Heart left ventricle (tissue), 16 donors: ENCODE measurements at regions of chr2 and their contacts with region 1.

Region 1: DNA sequence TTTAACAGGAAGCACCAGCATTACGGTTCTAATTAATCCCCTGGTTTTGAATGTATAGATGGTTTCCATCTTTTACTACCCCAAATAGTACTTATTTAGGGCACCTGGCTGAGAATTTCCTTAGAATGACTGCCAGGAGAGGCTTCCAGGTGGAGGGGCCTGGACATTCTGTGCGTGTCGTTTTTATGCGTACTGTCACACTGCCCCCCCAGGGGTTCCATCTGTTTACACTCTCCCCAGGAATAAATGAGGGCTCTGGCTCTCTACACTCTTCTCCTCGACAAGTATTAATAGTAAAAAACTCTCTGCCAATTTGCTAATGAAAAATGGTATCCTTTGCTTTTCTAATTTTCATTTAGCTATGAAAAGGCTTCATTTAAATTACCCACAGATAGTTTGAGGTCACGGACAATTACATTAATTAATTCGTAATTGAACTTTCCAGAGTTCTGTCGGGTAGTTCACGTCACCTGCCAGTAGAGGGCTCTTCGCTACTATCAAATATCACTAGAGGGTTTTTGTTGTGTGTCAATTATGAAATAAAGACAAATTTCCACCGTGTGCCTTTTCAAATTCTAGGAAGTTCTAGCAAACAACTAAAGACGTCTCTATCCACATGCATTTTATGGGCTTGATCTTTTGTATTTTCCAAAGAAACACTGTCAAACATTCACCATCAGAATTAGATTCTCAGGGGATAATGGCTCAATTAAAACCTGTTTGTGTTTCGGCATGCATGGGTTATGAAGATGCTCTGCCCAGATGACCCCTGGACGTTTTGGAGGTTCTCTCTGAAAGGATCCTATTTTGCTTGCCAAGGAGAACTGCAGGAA is 88.8 kb upstream of the ASB18 start:
- DNase-seq: no peak
- ATAC-seq: peak in 1 of 4 donors; percentile 49
- H3K4me3 ChIP-seq: no peak overlapping the region
- H3K27ac ChIP-seq: no peak overlapping the region
- H3K4me1 ChIP-seq: no peaks in the 10 kb centered on the region
- H3K27me3 ChIP-seq: no peaks in the 10 kb centered on the region
- CTCF ChIP-seq: peak; percentile 75 to 88 (median 83)
- POLR2A ChIP-seq: no peak

Region 2: GRCh38 chr2:236507393-236508085 is 154.6 kb after region 1 on chr2:
- intact Hi-C with region 1: loop called in 6 of 10 experiments (anchors 5 to 10 kb)
- DNase-seq: peak in 3 of 5 donors; percentile 33 to 57 (median 42)
- ATAC-seq: peak in 3 of 4 donors; percentile 44 to 78 (median 69)
- H3K4me3 ChIP-seq: peak overlapping the region in 11 of 12 donors; percentile 10 to 56 (median 45)
- H3K27ac ChIP-seq: no peak overlapping the region
- H3K4me1 ChIP-seq: peaks cover 0 to 7% (median 0%) of the 10 kb centered on the region in 12 donors
- H3K27me3 ChIP-seq: peaks cover 0 to 18% (median 6%) of the 10 kb centered on the region in 9 donors
- CTCF ChIP-seq: no peak
- POLR2A ChIP-seq: no peak

Region 3: DNA sequence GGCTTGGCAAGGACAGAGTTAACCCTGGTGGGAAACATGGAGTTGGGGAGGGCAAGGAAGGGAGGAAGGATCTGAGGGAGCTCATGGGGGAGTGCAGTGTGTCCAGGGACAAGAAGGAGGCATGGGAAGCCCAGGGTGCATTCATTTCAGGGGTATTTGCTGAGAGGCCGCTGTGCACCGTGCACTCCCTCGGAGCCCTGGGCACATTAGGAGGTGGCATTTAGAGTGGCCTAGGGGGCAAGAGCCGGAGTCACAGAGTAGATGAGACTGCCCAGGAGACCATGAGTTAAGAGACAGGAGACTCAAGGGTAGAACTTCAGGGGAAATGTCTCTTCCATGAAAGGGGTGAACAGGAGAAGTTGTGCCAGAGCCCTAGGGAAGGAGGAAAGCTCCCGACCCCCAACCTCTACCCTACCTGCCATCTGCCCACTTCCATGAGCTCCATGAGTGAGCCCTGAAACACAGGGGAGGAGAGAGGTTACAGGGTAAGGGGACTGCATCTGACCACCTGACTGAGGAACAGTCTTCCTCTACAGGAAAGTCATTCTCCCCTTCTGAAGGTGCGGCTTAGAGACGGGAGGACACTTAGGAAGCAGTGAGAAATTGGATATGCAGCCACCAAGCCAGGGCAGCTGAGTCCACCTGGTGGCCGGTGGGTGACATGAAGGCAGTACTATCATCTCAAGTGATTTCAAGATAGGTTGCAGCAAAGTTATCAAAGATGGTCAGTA is 674.2 kb after region 1 on chr2:
- intact Hi-C with region 1: loop called (anchors 1 to 5 kb)
- DNase-seq: peak; percentile 62 to 82 (median 65)
- ATAC-seq: peak; percentile 87 to 92 (median 92)
- H3K4me3 ChIP-seq: no peak overlapping the region
- H3K27ac ChIP-seq: no peak overlapping the region
- H3K4me1 ChIP-seq: peaks cover 0 to 9% (median 0%) of the 10 kb centered on the region in 12 donors
- H3K27me3 ChIP-seq: no peaks in the 10 kb centered on the region
- CTCF ChIP-seq: peak; percentile 62 to 94 (median 86)
- POLR2A ChIP-seq: no peak

Region 4: DNA sequence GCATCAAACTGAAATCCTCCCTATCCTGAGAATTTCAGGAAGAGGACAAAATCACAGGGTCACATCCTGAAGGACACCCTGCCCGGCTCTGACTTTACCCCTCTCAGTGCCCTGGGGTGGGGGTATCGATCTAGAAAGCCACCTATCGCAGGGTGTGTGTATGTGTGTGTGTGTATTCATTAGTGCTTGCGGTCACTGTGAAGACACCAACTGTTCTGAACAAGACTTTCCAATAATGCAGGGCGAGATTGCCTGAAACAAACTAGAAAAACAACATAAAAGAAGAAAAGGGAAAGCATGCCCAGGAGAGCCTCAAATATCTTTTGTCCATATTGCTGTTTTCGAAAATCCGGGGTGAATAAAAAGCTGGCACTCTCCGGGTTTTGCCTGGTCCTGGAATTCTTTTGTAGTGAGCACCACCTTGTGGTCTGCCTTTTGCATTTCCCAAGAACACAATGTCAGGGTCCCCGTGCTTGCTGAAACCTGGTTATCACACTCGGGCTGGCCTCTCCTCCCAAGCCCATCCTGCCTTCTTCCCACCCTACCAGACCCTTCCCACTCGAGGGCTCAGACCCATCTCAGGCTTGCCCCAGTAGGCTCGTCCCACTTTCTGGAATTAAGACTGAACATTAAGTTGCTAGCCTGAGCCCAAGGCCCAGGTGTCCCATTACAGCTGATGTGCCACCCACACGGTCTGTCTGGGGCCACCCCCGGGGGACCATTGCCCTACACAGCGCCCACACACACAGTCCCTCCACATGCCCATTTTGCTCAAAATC is 707.7 kb after region 1 on chr2:
- intact Hi-C with region 1: loop called (anchors 1 to 5 kb)
- DNase-seq: peak in 3 of 5 donors; percentile 38 to 54 (median 51)
- ATAC-seq: peak; percentile 49 to 81 (median 72)
- H3K4me3 ChIP-seq: no peak overlapping the region
- H3K27ac ChIP-seq: no peak overlapping the region
- H3K4me1 ChIP-seq: peaks cover 0 to 6% (median 0%) of the 10 kb centered on the region in 12 donors
- H3K27me3 ChIP-seq: no peaks in the 10 kb centered on the region
- CTCF ChIP-seq: peak; percentile 34 to 82 (median 70)
- POLR2A ChIP-seq: no peak